Calu3 (cell line): ENCODE measurements at regions of chr11 and their contacts with region 1.

Region 1: DNA sequence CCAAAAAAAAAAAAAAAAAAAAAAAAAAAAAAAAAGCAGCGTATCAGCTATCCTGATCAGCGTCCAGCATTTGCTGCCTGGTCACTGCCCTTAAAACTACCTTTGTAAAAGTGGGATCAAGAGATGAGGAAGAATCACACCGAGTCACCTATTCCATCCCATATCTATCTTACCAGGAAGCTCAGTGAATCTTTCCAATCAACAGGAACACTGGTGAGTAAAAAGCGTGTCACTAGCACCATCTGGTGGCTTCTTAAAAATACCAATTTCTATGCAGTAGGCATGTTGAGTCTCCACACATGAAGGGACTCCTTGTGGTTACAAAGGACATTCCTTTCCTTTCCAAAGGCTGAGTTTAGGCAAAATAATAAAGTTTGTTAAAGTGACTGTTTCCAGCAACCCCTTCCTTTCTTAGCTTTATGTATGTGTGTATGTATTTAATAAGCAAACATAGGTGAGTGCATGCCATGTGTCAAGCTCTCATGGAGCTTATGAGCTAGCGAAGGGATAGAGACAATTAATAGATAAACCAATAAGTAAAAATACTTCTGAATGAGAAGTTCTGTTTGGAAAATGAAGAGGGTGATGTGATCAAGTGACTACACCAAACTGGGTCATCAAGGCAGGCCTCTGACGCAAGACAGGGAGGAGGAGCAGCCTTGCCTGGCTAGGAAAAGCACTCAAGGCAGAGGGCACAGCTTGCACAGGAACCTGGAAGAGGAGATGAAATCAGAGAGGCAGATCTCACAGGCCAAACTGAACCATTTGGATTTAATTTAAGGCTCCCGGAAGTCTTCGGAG is 13.9 kb upstream of the TP53AIP1 start:
- DNase-seq: peak; percentile 41
- H3K4me3 Mint-ChIP-seq: no peak overlapping the region
- H3K27ac Mint-ChIP-seq: no peak overlapping the region
- H3K4me1 Mint-ChIP-seq: no peaks in the 10 kb centered on the region
- H3K27me3 Mint-ChIP-seq: no peaks in the 10 kb centered on the region
- CTCF ChIP-seq: peak; percentile 42

Region 2: DNA sequence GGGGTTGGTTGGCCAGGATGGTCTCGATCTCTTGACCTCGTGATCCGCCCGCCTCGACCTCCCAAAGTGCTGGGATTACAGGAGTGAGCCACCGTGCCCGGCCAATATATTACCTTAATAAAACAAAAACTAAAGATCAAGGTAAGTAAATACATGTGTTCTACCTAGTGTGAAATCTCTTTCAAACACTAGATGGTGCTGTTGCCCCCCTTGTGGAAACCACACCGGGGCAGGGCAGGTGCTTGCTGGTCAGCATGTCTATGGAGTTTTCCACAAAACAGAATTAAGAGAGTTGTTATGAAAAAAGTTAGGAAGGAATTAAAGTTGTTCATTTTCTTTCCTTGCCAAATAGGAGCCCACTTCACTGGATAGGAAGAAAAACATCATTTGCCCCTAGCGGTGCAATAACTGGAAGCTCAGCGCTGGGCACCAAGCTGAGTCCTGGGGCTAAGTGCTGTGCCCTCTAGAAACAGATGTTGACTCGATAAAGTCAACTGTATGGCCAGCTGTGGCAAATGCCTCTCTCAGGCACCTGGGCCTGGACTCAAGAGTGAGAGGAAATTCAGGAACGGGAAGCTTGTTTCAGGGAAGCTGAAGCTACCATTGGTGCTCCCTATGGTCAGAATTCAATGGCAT is 71.8 kb before region 1 on chr11:
- CTCF ChIA-PET with region 1: interaction called, 30 read pairs
- intact Hi-C with region 1: loop called (anchors 1 kb)
- DNase-seq: peak; percentile 76
- H3K4me3 Mint-ChIP-seq: no peak overlapping the region
- H3K27ac Mint-ChIP-seq: no peak overlapping the region
- H3K4me1 Mint-ChIP-seq: peaks cover 10% of the 10 kb centered on the region
- H3K27me3 Mint-ChIP-seq: peaks cover 45% of the 10 kb centered on the region
- CTCF ChIP-seq: peak; percentile 56

Region 3: DNA sequence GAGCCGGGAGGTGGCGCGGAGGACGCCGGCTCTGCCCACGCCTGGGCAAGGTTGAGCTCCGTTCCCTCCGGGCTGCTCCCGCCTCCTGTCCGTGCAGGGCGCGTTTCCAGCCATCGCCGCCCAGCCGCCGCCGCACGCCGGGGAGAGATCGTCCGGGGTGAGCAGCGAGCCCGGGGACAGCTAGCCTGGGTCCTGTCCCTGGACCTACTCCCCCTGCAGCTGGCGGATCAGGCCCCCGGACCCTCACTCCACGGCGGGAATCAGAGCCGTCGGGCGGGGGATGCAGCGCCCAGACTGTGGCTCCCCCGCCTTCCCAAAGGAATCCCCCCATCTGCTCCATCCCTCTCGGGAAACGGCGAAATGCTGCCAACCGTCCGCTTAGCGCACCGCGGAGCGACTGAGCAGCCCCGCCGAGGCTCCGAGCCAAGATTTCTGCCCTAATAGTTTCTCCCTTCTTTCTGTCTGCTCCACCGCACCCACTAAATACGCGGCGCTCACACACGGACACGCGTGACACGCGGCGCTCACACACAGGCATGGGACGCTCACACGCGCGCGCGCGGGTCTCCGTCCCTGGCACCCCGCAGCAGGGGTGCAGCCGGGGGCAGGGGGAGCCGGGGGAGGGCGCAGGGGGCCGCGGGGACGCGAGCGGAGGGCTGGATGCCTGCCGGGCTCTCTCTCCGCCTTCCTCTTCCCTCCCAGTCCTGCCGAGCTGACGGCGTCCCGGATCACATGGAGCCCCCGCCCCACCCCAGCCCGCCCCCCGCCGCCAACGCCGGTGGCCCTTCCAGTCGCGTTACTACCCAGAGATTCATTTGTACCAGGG is 65.8 kb before region 1 on chr11 and contains the start of gene KCNJ5:
- CTCF ChIA-PET with region 1: interaction called, 20 read pairs
- intact Hi-C with region 1: loop called (anchors 1 kb)
- DNase-seq: peak; percentile 35
- H3K4me3 Mint-ChIP-seq: peak within 1 kb of the TSS; percentile 72
- H3K27ac Mint-ChIP-seq: no peak within 1 kb of the TSS
- H3K4me1 Mint-ChIP-seq: peaks cover 10% of the 10 kb centered on the region
- H3K27me3 Mint-ChIP-seq: peaks cover 14% of the 10 kb centered on the region
- CTCF ChIP-seq: no peak
- total RNA-seq, gene KCNJ5: not detected in 2 replicates